ENCODE measurements at regions of chr2 and their contacts with region 1.

Region 1: GRCh38 chr2:231966886-231967285 is 5.4 kb downstream of the DIS3L2 start:
- DNase-seq: no peak
- ATAC-seq: no peak
- H3K4me3 ChIP-seq: no peak overlapping the region
- H3K4me3 Mint-ChIP-seq: peak overlapping the region; percentile 15
- H3K27ac ChIP-seq: no peak overlapping the region
- H3K27ac Mint-ChIP-seq: peak overlapping the region; percentile 47
- H3K4me1 ChIP-seq: peaks cover 20% of the 10 kb centered on the region
- H3K4me1 Mint-ChIP-seq: peaks cover 57% of the 10 kb centered on the region
- H3K27me3 ChIP-seq: no peaks in the 10 kb centered on the region
- H3K27me3 Mint-ChIP-seq: no peaks in the 10 kb centered on the region
- CTCF ChIP-seq: no peak

Region 2: DNA sequence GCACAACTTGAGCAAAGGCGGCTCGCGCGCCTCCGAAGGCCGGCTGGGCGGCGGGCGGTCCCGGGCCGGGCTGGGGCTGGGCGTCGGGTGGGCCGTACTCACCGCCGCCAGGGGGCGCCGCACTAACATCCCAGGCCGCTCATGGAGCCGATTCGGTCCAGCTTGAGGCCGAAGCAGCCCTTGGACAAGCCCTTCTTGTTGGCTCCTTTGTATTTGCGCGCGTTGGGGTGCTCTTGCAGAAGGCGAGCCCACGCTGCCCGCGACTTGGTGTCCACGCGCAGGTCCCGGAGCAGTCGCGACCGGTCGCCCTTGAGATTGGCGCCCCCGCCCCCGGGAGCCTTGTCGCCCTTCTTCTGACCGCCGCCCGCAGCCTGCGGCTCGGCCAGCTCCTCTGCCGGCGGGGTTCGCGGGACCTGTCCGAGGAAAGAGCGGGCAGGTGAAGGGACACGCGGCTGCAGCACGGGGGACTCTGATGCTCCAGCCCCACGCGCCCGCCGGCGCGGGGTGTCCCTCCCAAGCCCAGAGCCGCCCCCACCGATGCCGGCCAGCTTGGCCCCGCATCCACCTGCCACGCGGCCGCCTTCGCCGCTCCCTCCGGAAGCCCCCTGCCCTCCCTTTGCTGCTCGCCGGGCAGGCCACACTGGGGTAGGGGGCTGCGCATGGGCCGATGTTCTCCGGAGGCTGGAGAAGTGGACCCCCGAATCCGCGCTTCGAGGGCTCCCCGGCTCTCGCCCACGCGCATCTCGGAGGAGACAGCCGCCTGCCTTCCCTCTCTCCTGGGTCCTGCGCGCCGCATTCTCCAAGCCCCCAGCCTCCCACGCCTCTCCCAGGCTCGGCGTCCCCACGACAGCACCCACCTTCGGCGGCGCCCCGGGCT is 41.3 kb before region 1 on chr2:
- CTCF ChIA-PET with region 1: no interaction called
- POLR2A ChIA-PET with region 1: no interaction called
- intact Hi-C with region 1: loop called in 1 of 2 experiments (anchors 1 kb)
- DNase-seq: peak; percentile 46 to 85 (median 68)
- ATAC-seq: peak; percentile 62
- H3K4me3 ChIP-seq: peak overlapping the region; percentile 35 to 66
- H3K4me3 Mint-ChIP-seq: peak overlapping the region; percentile 76
- H3K27ac ChIP-seq: no peak overlapping the region
- H3K27ac Mint-ChIP-seq: no peak overlapping the region
- H3K4me1 ChIP-seq: peaks cover 16% of the 10 kb centered on the region
- H3K4me1 Mint-ChIP-seq: peaks cover 11% of the 10 kb centered on the region
- H3K27me3 ChIP-seq: peaks cover 7 to 11% of the 10 kb centered on the region in 2 experiments
- H3K27me3 Mint-ChIP-seq: peaks cover 33% of the 10 kb centered on the region
- CTCF ChIP-seq: peak; percentile 73

Measured in CD8-positive, alpha-beta T cell (primary cell).